Ascending aorta (tissue), 2 donors: ENCODE measurements at regions of chr9 and their contacts with region 1.

Region 1: DNA sequence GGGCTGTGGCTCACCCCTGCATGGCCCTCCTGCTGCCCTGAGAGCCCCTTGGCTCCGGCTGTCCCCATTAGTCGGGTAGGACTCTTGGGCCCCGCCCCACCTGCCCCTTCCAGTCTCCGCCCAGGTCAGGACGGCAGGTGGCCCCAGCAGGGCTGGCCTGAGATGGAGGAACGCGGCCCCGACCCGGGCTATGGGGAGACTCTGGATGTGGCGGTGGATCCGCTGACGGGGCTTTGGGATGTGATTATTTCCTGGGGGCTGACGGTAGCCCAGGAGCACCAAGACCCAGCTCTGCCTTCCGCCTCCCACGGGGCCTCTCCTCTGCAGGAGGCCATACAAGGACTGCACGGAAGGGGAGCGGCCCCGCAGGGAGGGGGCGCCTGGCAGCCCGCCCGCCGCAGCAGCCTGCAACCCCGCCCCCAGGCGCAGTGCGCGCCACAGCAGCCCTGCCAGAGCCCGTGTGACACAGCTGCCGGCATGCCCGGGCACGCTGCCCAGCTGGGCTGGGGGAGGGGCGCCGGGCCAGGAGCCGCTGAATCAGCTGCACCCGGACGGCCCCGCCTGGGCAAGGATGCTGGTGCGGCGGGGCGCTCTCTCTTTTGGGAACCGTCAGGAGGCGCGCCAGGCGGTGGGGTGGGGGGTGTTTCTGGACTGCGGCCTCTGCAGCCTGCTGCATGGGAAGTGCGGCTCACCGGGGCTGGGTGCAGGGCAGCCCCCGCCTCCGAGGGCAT is 9.2 kb downstream of the TMEM250 start:
- DNase-seq: peak; percentile 82 to 98
- H3K4me3 ChIP-seq: peak overlapping the region; percentile 43 to 58
- H3K27ac ChIP-seq: peak overlapping the region; percentile 59 to 82
- H3K4me1 ChIP-seq: peaks cover 21 to 30% of the 10 kb centered on the region in 2 donors
- H3K27me3 ChIP-seq: no peaks in the 10 kb centered on the region
- CTCF ChIP-seq: peak in 2 of 3 experiments; percentile 22 to 27

Region 2: DNA sequence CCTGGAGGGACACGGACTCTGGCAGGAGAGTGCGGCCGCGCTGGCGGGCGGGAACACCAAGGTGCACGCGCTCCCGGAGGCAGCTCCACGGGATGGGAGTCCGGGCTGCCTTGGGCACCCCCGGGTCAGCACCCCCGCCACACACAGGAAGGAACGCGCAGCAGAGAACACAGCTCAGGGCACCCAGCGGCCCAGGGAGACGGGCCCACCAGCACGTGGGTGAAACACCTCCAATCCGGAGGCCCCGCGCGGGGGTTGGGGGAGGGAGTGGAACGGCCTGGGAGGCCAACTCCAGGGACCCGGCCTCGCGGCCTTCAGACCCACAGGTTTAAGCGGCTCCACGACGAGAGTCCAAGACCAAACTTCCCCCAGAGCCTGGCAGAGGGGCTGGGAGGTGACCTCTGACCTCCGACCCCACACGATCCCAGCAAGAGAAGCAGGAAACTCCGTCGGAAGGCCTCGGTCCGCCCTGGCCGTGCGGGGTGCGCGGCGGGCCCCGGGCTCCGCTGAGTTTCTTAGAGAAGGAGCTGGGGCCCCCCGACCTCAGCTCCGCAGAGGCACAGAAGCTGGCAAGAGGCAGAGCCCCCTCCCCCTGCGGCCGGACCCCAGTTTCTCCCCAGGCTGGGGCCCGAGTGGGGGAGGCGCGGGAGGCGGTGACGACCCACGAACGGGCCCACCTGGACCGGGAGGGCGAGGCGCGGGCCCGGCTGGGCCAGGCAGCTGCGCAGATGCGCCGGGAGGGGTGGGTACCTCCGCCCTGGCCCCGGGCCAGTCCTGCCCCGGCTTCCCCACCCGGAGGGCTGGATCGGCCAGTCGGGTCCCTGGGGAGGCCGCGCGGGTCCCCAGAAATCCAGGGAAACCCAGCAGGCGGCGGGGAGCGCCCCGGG is 15.3 kb before region 1 on chr9:
- intact Hi-C with region 1: loop called (anchors 1 kb)
- DNase-seq: peak in 1 of 2 donors; percentile 91
- H3K4me3 ChIP-seq: peak overlapping the region; percentile 91 to 94
- H3K27ac ChIP-seq: peak overlapping the region; percentile 91 to 98
- H3K4me1 ChIP-seq: peaks cover 22 to 48% of the 10 kb centered on the region in 2 donors
- H3K27me3 ChIP-seq: no peaks in the 10 kb centered on the region
- CTCF ChIP-seq: peak in 2 of 3 experiments; percentile 9 to 19